MCF 10A (cell line): ENCODE measurements at regions of chr6 and their contacts with region 1.

Region 1: GRCh38 chr6:48101277-48101676 is 9.7 kb downstream of the PTCHD4 start:
- DNase-seq: peak; percentile 61
- H3K4me3 Mint-ChIP-seq: no peak overlapping the region
- H3K27ac Mint-ChIP-seq: peak overlapping the region; percentile 61
- H3K4me1 Mint-ChIP-seq: peaks cover 40% of the 10 kb centered on the region
- H3K27me3 Mint-ChIP-seq: no peaks in the 10 kb centered on the region
- CTCF ChIP-seq: no peak

Region 2: DNA sequence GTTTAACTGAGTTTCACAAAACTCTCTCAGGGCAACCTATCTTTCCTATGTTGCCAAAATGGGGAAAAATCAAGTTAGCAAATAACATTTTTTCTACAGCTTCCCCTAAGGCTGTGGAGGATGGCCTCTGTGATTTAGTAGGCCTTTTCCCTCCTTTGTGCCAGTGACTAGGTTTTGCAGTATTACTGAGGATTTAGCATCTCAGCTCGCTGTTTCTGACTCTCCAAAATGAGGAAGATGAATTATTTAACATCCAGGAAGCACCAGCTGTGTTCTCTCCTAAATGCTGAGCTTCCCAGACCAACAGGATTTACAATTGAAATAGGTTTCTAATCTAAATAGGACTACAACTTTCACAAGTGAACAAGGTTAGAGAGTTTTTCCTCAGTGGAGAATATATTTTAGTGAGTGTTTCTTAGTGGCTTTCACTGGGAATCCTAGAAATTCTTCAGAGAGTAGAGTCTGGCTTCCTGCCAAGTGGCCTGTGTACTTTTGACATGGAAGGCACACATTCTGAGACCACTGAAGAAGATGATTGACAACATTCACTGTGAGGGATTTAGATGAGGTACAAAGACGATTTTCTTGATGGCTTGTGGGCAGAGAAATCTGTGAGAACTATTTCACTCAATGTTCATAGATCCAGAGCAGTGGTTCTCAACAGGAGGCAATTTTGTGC is 52.7 kb before region 1 on chr6:
- CTCF ChIA-PET with region 1: no interaction called
- POLR2A ChIA-PET with region 1: no interaction called
- intact Hi-C with region 1: no loop called
- DNase-seq: no peak
- H3K4me3 Mint-ChIP-seq: no peak overlapping the region
- H3K27ac Mint-ChIP-seq: no peak overlapping the region
- H3K4me1 Mint-ChIP-seq: no peaks in the 10 kb centered on the region
- H3K27me3 Mint-ChIP-seq: no peaks in the 10 kb centered on the region
- CTCF ChIP-seq: no peak

Region 3: GRCh38 chr6:48150701-48151100 is 49.4 kb after region 1 on chr6:
- CTCF ChIA-PET with region 1: no interaction called
- POLR2A ChIA-PET with region 1: no interaction called
- intact Hi-C with region 1: no loop called
- DNase-seq: no peak
- H3K4me3 Mint-ChIP-seq: peak overlapping the region; percentile 3
- H3K27ac Mint-ChIP-seq: peak overlapping the region; percentile 75
- H3K4me1 Mint-ChIP-seq: peaks cover 9% of the 10 kb centered on the region
- H3K27me3 Mint-ChIP-seq: no peaks in the 10 kb centered on the region
- CTCF ChIP-seq: no peak

Region 4: GRCh38 chr6:48213076-48213788 is 112.0 kb after region 1 on chr6:
- CTCF ChIA-PET with region 1: no interaction called
- POLR2A ChIA-PET with region 1: no interaction called
- intact Hi-C with region 1: no loop called
- DNase-seq: no peak
- H3K4me3 Mint-ChIP-seq: no peak overlapping the region
- H3K27ac Mint-ChIP-seq: no peak overlapping the region
- H3K4me1 Mint-ChIP-seq: peaks cover 5% of the 10 kb centered on the region
- H3K27me3 Mint-ChIP-seq: no peaks in the 10 kb centered on the region
- CTCF ChIP-seq: no peak

Region 5: DNA sequence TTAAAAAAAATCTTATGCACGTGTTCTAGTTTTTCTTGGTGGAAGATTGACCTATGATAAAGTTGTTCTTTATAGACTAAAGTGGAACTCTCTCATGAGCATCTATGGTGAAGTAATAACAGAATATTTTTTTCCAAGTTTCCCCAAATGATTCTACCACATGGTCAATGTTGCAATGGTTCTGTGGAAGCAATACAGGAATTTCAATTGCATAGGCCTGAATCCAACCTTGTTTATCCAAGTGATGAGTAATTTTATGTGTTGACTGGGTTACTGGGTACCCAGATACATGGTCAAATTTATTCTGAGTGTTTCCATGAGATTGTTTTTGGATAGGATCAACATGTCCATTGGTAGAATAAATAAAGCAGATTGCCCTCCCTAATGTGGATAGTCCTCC is 780.3 kb after region 1 on chr6:
- CTCF ChIA-PET with region 1: no interaction called
- POLR2A ChIA-PET with region 1: no interaction called
- intact Hi-C with region 1: loop called (anchors 5 kb)
- DNase-seq: peak; percentile 21
- H3K4me3 Mint-ChIP-seq: no peak overlapping the region
- H3K27ac Mint-ChIP-seq: no peak overlapping the region
- H3K4me1 Mint-ChIP-seq: no peaks in the 10 kb centered on the region
- H3K27me3 Mint-ChIP-seq: no peaks in the 10 kb centered on the region
- CTCF ChIP-seq: no peak